ENCODE measurements at regions of chr17 and their contacts with region 1.

Region 1: DNA sequence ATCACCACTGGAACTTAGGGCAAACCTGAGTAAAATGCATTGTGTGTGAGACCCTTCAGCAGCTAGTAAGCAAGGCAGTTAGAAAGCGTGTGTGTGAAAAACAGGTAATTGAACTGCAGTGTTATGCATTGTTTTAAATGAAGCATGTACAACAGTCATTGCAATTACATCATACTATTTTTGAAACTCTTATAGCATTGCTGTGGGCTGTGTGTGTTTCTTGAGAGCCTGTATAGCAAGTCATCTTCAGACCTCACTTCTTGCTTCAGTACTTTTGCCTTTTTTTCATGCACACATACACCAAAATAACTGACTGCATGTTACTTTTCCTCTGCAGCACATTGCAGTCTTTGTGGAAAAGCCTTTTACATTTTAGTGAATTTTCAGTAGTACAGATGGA is 19.2 kb downstream of the PTRH2 start:
- DNase-seq: no peak
- H3K4me3 Mint-ChIP-seq: no peak overlapping the region
- H3K27ac Mint-ChIP-seq: peak overlapping the region; percentile 51
- H3K4me1 Mint-ChIP-seq: no peaks in the 10 kb centered on the region
- H3K27me3 Mint-ChIP-seq: no peaks in the 10 kb centered on the region
- CTCF ChIP-seq: no peak

Region 2: DNA sequence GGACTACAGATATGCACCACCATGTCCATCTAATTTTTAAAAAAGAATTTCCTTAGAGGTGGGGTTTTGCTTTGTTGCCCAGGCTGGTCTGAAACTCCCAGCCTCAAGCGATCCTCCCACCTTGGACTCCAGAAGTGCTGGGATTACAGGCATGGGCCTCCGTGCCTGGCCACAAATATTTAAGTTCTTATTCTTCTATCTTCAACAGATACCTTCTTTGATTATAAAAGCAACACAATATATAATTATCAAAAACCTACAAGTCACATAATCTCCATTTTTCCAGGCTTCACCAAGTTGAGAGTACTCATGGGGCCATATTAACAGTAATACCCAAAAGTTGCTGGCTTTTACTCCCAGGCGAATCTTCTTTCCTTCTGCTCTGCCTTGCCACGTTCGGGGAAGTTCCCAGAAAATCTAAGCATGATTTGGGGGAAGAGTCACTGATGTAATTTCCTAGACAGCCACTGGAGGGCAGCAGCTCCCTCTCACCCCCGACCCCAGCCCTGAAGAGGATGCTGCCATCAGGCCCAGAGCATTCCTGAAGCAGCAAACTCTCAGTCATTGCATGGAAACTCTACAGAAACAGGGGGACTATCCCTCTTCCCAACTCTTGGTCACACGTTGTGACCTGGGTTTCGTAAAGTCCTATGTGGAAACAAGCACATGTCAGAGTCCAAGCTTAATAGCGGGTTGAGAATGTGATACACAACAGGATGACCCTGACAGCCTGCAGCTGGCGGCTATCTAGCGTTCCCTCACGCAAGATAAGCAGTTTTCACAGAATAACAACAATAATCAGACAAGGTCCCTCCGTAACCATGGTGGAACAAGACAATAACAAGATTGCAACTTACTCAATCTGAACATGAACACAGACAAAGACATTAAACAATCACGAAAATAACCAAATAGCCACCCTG is 166.5 kb before region 1 on chr17:
- CTCF ChIA-PET with region 1: no interaction called
- POLR2A ChIA-PET with region 1: no interaction called
- intact Hi-C with region 1: no loop called
- DNase-seq: peak; percentile 67
- H3K4me3 Mint-ChIP-seq: no peak overlapping the region
- H3K27ac Mint-ChIP-seq: peak overlapping the region; percentile 50
- H3K4me1 Mint-ChIP-seq: peaks cover 12% of the 10 kb centered on the region
- H3K27me3 Mint-ChIP-seq: no peaks in the 10 kb centered on the region
- CTCF ChIP-seq: peak; percentile 85

Region 3: DNA sequence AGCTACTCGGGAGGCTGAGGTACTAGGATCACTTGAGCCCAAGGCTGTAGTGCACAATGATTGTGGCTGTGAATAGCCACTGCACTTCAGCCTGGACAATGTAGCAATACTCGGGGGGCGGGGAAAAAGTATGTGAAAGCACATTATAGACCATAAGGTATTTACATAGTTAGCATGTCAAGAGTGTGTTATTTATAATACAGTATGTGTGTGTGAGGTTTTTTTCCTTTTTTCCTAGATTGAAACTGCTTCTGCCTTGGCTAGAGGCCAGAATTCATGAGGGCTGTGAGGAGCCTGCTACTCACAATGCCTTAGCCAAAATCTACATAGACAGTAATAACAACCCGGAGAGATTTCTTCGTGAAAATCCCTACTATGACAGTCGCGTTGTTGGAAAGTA is 11.3 kb before region 1 on chr17:
- CTCF ChIA-PET with region 1: interaction called, 8 read pairs
- POLR2A ChIA-PET with region 1: interaction called, 14 read pairs
- intact Hi-C with region 1: no loop called
- DNase-seq: no peak
- H3K4me3 Mint-ChIP-seq: no peak overlapping the region
- H3K27ac Mint-ChIP-seq: no peak overlapping the region
- H3K4me1 Mint-ChIP-seq: peaks cover 8% of the 10 kb centered on the region
- H3K27me3 Mint-ChIP-seq: no peaks in the 10 kb centered on the region
- CTCF ChIP-seq: no peak

Measured in MCF 10A (cell line).